GM18951 (cell line): ENCODE measurements at regions of chr3 and their contacts with region 1.

Region 1: GRCh38 chr3:38521391-38521987 is 25.3 kb downstream of the EXOG start:
- POLR2A ChIP-seq: no peak

Region 2: DNA sequence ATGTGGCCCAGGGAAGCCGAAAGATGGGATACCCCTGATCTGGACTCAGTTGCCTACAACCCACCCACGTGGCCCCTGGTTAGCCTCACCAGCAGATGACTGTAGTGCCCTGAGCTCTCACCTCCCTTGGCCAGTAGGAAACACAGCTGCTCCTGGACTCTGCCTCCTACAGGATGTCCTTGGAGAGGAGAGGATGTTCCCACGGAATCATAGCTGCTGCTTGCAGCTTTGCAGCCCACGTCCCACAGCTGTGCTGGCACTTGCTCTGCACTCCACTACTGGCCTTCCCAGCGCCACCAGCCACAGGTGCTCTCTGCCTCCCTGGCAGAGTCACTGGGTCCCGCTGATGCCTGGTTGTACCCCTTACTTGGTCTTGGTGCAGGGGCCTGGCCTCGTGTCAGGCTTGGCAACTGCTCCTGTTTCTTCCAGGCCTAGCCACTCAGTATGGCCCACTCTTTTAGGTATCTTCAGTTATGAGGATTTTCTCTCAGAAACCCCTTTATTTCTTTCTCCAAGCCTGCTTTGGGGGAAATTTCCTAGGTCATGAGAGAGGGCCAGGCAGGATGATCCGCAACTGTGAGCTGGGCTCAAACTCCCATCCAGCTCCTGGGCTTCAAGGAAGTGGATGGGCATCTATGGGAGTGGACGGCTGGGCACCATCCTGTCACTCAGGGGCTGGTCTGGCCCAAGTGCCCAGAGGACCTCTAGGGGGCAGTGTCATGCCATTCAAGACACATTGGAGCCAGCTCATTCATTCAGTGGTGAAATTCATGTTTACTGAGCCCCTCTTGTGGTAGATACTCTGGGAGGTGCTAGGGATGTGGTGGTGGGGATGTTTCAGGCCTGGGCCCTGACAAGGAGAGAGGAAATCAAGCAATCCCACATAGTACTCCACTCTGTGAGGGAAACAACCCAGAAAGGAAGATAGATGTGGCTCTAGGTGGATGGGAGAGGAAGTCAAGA is 547.1 kb before region 1 on chr3:
- in situ Hi-C with region 1: no loop called
- POLR2A ChIP-seq: no peak

Region 3: GRCh38 chr3:38651154-38651789 is 129.8 kb after region 1 on chr3:
- in situ Hi-C with region 1: loop called (anchors 10 kb)
- POLR2A ChIP-seq: no peak

Region 4: GRCh38 chr3:38992117-38992760 is 470.8 kb after region 1 on chr3:
- in situ Hi-C with region 1: no loop called
- POLR2A ChIP-seq: no peak